Ascending aorta (tissue), 2 donors: ENCODE measurements at regions of chr7 and their contacts with region 1.

Region 1: GRCh38 chr7:117715784-117716445 is 157.3 kb downstream of the CTTNBP2 start:
- DNase-seq: no peak
- H3K4me3 ChIP-seq: no peak overlapping the region
- H3K27ac ChIP-seq: no peak overlapping the region
- H3K4me1 ChIP-seq: no peaks in the 10 kb centered on the region
- H3K27me3 ChIP-seq: no peaks in the 10 kb centered on the region
- CTCF ChIP-seq: peak in 2 of 3 experiments; percentile 33 to 46

Region 2: GRCh38 chr7:117212969-117213877 is 502.7 kb before region 1 on chr7:
- intact Hi-C with region 1: loop called (anchors 10 kb)
- DNase-seq: peak in 1 of 2 donors; percentile 65
- H3K4me3 ChIP-seq: no peak overlapping the region
- H3K27ac ChIP-seq: no peak overlapping the region
- H3K4me1 ChIP-seq: no peaks in the 10 kb centered on the region
- H3K27me3 ChIP-seq: no peaks in the 10 kb centered on the region
- CTCF ChIP-seq: peak; percentile 47 to 89 (median 86)

Region 3: GRCh38 chr7:117399820-117400422 is 316.0 kb before region 1 on chr7:
- intact Hi-C with region 1: loop called (anchors 5 kb)
- DNase-seq: no peak
- H3K4me3 ChIP-seq: no peak overlapping the region
- H3K27ac ChIP-seq: no peak overlapping the region
- H3K4me1 ChIP-seq: peaks cover 0 to 5% of the 10 kb centered on the region in 2 donors
- H3K27me3 ChIP-seq: no peaks in the 10 kb centered on the region
- CTCF ChIP-seq: peak in 2 of 3 experiments; percentile 35 to 53

Region 4: DNA sequence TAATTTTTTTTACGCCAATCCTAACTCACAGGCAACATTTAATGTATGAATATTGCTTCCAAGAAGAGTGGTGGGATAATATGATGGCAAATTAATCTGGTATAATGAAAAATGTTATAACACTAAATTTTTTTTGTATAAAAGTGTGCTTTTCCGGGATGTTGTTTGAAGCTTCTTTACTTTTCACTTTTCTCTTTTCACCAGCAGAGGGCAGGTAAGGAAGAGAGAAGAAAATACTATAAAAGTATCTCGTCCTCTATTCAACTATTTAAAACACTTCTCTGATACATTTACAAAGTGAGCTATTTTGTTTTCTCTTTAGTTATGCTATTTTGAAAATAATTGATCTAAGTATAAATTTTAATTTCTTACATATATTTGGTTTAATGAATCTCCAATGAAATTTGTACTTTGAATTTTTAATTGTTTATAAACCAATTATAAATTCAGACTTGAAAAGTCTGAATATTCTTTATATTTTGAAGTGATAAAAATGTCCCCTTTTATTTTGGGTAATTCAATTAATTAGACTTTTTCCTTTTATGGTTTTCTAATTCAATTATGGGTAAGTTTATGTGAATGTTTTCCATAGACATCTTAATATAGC is 256.8 kb before region 1 on chr7:
- intact Hi-C with region 1: loop called (anchors 2 kb)
- DNase-seq: no peak
- H3K4me3 ChIP-seq: no peak overlapping the region
- H3K27ac ChIP-seq: no peak overlapping the region
- H3K4me1 ChIP-seq: no peaks in the 10 kb centered on the region
- H3K27me3 ChIP-seq: no peaks in the 10 kb centered on the region
- CTCF ChIP-seq: peak in 2 of 3 experiments; percentile 36 to 48